Activated CD4-positive, alpha-beta T cell treated with anti-CD3 and anti-CD28 coated beads for 36 hours (primary cell): ENCODE measurements at regions of chr6 and their contacts with region 1.

Region 1: GRCh38 chr6:18155150-18155863 is at the start of gene KDM1B:
- DNase-seq: peak; percentile 99
- ATAC-seq: peak; percentile 97
- H3K4me3 Mint-ChIP-seq: peak within 1 kb of the TSS; percentile 93
- H3K27ac Mint-ChIP-seq: peak within 1 kb of the TSS; percentile 90
- H3K4me1 Mint-ChIP-seq: peaks cover 27% of the 10 kb centered on the region
- H3K27me3 Mint-ChIP-seq: no peaks in the 10 kb centered on the region
- total RNA-seq, gene KDM1B: 13.4 to 13.9 TPM

Region 2: DNA sequence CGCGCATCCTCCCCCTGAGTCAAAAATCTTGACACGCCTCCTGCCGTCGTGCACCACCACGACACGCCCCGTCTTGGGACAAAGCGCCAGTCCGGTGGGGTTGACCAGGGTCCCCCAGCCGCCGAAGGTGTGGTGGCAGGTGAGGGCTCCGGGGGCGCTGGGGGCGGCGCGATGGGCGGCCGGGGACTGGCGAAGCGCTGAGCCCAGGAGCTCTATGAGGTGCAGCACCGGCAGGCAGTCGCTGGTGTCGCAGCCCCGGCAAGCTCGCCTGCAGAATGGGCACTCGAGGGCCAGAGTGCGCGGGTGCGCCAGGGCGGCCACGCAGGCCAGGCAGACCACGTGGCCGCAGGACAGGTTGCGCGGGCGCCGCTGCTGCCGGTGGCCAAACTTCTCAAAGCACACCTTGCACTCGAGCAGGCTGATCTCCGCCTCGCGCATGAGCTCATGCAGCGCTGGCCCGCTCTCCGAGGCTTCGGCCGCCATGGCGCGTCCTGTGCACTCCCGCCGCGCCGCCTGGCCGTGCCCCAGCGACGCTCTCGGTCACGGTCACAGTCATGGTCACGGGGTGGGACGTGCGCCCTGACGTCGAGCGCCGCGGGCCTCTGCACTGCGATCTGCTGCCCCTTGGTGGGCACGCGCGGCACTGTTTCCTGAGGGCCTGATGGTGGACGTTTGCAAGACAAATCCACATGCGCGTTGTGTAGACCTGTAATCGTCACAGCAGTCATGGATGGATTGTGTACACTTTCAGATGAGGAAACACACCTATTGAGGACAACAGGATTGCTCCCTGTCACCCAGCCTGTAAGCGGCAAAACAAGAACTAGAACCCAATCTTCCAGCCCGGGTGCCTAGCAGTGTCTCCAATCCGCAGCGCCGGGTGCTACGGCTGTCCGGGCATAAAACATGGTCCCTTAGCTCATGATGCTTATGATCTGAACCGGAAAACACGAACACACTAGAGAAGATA is 32.9 kb before region 1 on chr6 and contains the start of gene NHLRC1:
- CTCF ChIA-PET with region 1: no interaction called
- POLR2A ChIA-PET with region 1: no interaction called
- intact Hi-C with region 1: loop called in 1 of 2 experiments (anchors 1 kb)
- DNase-seq: peak; percentile 87
- ATAC-seq: peak; percentile 96
- H3K4me3 Mint-ChIP-seq: peak within 1 kb of the TSS; percentile 68
- H3K27ac Mint-ChIP-seq: peak within 1 kb of the TSS; percentile 23
- H3K4me1 Mint-ChIP-seq: peaks cover 11% of the 10 kb centered on the region
- H3K27me3 Mint-ChIP-seq: peaks cover 39% of the 10 kb centered on the region
- total RNA-seq, gene NHLRC1: 0.11 to 0.16 TPM

Region 3: GRCh38 chr6:18242062-18242851 is 87.0 kb after region 1 on chr6:
- CTCF ChIA-PET with region 1: no interaction called
- POLR2A ChIA-PET with region 1: no interaction called
- intact Hi-C with region 1: loop called in 1 of 2 experiments (anchors 5 kb)
- DNase-seq: no peak
- ATAC-seq: peak; percentile 24
- H3K4me3 Mint-ChIP-seq: no peak overlapping the region
- H3K27ac Mint-ChIP-seq: peak overlapping the region; percentile 78
- H3K4me1 Mint-ChIP-seq: peaks cover 60% of the 10 kb centered on the region
- H3K27me3 Mint-ChIP-seq: no peaks in the 10 kb centered on the region